ENCODE measurements at regions of chr1 and their contacts with region 1.

Region 1: DNA sequence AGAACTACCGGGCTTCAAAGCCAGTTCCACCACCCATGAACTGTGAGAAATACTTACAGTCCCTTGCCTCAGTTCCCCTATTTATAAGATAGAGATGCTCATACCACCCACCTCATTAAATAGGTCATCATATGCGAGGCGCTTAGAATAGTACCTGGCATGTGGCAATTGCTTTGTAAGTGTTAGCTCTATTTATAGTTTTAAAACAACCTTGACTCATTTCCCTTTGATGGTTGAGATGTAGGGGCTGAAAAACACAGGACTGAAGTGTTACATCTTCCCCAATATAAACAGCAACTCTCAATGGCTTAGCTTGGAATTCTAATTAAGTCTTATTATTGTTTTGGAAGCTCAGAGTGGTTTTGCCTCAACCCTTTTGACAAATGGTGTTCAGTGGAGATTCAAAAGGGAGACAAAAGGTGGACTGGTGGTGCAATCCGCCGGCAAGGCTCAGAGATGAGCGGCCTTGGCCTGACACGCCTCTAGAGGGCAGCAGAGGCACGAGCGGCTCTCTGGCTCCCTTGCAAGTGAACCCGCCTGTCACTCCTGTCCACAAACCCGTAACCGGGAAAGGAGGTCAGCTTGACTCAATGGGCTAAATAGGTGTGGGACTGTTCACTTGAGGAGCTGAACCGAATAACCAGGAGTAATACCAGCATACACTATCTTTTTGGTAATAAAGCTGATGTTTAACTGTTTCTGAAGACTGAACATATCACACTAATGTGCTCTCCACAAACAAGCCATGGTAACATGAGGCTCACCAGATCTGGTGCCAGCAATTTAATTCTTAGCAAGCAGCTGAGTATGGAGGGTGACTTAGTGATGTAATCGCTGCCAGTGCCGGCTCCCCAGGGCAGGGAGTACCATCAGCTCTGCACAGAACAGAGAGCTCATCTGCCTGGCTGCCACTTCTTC is 19.5 kb upstream of the SMYD2 start:
- DNase-seq: peak; percentile 87
- ATAC-seq: peak; percentile 91
- H3K4me3 Mint-ChIP-seq: no peak overlapping the region
- H3K27ac Mint-ChIP-seq: no peak overlapping the region
- H3K4me1 Mint-ChIP-seq: peaks cover 24% of the 10 kb centered on the region
- H3K27me3 Mint-ChIP-seq: peaks cover 70% of the 10 kb centered on the region

Region 2: DNA sequence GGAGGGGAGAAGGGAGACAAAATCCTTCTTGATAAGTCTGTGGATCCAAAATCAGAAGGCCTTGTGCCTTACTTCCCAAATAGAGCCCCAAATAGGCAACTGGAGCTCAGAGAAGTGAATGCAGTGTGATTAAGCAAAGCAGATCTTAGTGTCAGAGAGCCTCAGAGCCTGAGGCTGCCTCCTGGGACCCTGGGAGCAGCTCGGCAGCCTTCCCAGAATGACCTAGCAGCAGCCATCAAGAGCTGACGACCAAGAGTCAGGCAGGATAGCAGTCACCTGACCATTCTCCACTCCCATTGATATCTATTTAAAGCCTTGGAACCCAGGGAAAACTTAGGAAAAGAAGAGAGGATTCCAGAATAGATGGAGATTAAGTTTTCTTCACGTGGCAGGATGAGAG is 58.5 kb before region 1 on chr1:
- CTCF ChIA-PET with region 1: no interaction called
- DNase-seq: no peak
- ATAC-seq: no peak
- H3K4me3 Mint-ChIP-seq: no peak overlapping the region
- H3K27ac Mint-ChIP-seq: no peak overlapping the region
- H3K4me1 Mint-ChIP-seq: no peaks in the 10 kb centered on the region
- H3K27me3 Mint-ChIP-seq: peaks cover 29% of the 10 kb centered on the region

Region 3: GRCh38 chr1:214213136-214213535 is 48.3 kb before region 1 on chr1:
- CTCF ChIA-PET with region 1: interaction called, 13 read pairs
- DNase-seq: no peak
- ATAC-seq: no peak
- H3K4me3 Mint-ChIP-seq: no peak overlapping the region
- H3K27ac Mint-ChIP-seq: no peak overlapping the region
- H3K4me1 Mint-ChIP-seq: no peaks in the 10 kb centered on the region
- H3K27me3 Mint-ChIP-seq: peaks cover 42% of the 10 kb centered on the region

Region 4: DNA sequence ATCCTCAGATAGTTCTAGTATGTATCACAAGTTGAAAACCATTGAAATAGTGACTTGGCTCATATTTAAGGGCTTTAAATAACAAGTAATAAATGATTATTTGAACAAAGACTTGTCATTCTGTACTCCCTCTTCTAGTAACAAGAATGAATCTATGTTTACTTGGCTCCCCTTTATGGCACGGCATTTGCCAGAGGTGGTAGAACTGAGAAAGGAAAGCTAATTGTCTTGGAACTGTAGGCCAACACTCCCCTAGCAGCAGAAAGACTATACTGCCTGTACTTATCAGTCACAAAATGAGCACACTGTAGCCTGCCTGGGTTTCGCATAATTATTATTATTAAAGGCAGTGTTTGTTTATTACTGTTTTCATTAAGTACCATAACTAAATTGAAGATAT is 10.1 kb before region 1 on chr1:
- CTCF ChIA-PET with region 1: interaction called, 19 read pairs
- DNase-seq: no peak
- ATAC-seq: no peak
- H3K4me3 Mint-ChIP-seq: no peak overlapping the region
- H3K27ac Mint-ChIP-seq: no peak overlapping the region
- H3K4me1 Mint-ChIP-seq: no peaks in the 10 kb centered on the region
- H3K27me3 Mint-ChIP-seq: peaks cover 46% of the 10 kb centered on the region

Region 5: GRCh38 chr1:214281021-214281719 is 19.7 kb after region 1 on chr1 and contains the start of gene SMYD2:
- CTCF ChIA-PET with region 1: interaction called, 11 read pairs
- DNase-seq: peak; percentile 72
- ATAC-seq: peak; percentile 78
- H3K4me3 Mint-ChIP-seq: peak within 1 kb of the TSS; percentile 95
- H3K27ac Mint-ChIP-seq: peak within 1 kb of the TSS; percentile 90
- H3K4me1 Mint-ChIP-seq: peaks cover 33% of the 10 kb centered on the region
- H3K27me3 Mint-ChIP-seq: no peaks in the 10 kb centered on the region
- total RNA-seq, gene SMYD2: 23.1 to 26.5 TPM

Region 6: GRCh38 chr1:214316593-214316992 is 55.1 kb after region 1 on chr1:
- CTCF ChIA-PET with region 1: interaction called, 64 read pairs
- DNase-seq: no peak
- ATAC-seq: no peak
- H3K4me3 Mint-ChIP-seq: no peak overlapping the region
- H3K27ac Mint-ChIP-seq: no peak overlapping the region
- H3K4me1 Mint-ChIP-seq: peaks cover 4% of the 10 kb centered on the region
- H3K27me3 Mint-ChIP-seq: no peaks in the 10 kb centered on the region